MCF 10A (cell line): ENCODE measurements at regions of chr11 and their contacts with region 1.

Region 1: GRCh38 chr11:207208-207862 is at the starts of genes BET1L and RIC8A:
- DNase-seq: peak; percentile 97
- H3K4me3 Mint-ChIP-seq: peak within 1 kb of the TSS; percentile 99
- H3K27ac Mint-ChIP-seq: peak within 1 kb of the TSS; percentile 99
- H3K4me1 Mint-ChIP-seq: peaks cover 15% of the 10 kb centered on the region
- H3K27me3 Mint-ChIP-seq: no peaks in the 10 kb centered on the region
- CTCF ChIP-seq: no peak
- total RNA-seq, gene BET1L: 65.3 and 66.1 TPM in 2 replicates
- total RNA-seq, gene RIC8A: 93.3 and 109 TPM in 2 replicates

Region 2: GRCh38 chr11:223026-223789 is 15.9 kb after region 1 on chr11:
- CTCF ChIA-PET with region 1: interaction called, 6 read pairs
- POLR2A ChIA-PET with region 1: interaction called, 23 read pairs
- intact Hi-C with region 1: no loop called
- DNase-seq: no peak
- H3K4me3 Mint-ChIP-seq: no peak overlapping the region
- H3K27ac Mint-ChIP-seq: peak overlapping the region; percentile 38
- H3K4me1 Mint-ChIP-seq: peaks cover 9% of the 10 kb centered on the region
- H3K27me3 Mint-ChIP-seq: no peaks in the 10 kb centered on the region
- CTCF ChIP-seq: no peak

Region 3: GRCh38 chr11:304915-305843 is 97.8 kb after region 1 on chr11:
- CTCF ChIA-PET with region 1: interaction called, 3 read pairs
- POLR2A ChIA-PET with region 1: interaction called, 14 read pairs
- intact Hi-C with region 1: no loop called
- DNase-seq: peak; percentile 74
- H3K4me3 Mint-ChIP-seq: no peak overlapping the region
- H3K27ac Mint-ChIP-seq: no peak overlapping the region
- H3K4me1 Mint-ChIP-seq: peaks cover 20% of the 10 kb centered on the region
- H3K27me3 Mint-ChIP-seq: no peaks in the 10 kb centered on the region
- CTCF ChIP-seq: peak; percentile 58

Region 4: GRCh38 chr11:355581-356458 is 148.5 kb after region 1 on chr11:
- CTCF ChIA-PET with region 1: interaction called, 3 read pairs
- POLR2A ChIA-PET with region 1: interaction called, 32 read pairs
- intact Hi-C with region 1: no loop called
- DNase-seq: peak; percentile 94
- H3K4me3 Mint-ChIP-seq: peak overlapping the region; percentile 35
- H3K27ac Mint-ChIP-seq: peak overlapping the region; percentile 62
- H3K4me1 Mint-ChIP-seq: peaks cover 28% of the 10 kb centered on the region
- H3K27me3 Mint-ChIP-seq: peaks cover 11% of the 10 kb centered on the region
- CTCF ChIP-seq: no peak

Region 5: DNA sequence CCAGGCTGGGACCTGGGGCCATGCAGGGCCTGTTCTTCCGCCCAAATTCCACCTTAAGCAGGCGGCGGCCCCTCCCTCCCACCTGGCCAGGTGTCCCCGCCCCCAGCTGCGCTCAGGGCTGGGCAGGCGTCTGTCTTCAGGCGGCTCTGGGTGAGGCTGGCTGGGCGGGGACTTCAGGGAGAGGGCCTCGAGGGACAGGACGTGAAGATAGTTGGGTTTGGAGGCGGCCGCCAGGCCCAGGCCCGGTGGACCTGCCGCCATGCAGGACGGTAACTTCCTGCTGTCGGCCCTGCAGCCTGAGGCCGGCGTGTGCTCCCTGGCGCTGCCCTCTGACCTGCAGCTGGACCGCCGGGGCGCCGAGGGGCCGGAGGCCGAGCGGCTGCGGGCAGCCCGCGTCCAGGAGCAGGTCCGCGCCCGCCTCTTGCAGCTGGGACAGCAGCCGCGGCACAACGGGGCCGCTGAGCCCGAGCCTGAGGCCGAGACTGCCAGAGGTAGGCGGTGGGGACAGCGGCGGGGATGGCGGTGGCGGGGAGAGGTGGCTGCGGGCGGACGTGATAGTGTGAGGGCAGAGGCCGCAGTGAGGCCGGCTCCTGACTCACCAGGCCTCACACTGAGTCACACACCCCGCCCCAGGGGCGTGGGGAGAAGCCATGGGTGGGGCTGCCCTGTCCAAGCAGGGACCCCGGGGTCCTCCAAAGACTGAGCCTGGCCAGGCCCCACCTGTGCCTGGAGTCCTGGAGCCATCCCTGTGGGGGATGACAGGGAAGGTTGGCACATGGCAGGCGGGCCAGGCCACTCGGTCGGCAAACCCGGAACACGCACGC is 186.9 kb after region 1 on chr11 and contains the start of gene PKP3:
- CTCF ChIA-PET with region 1: no interaction called
- POLR2A ChIA-PET with region 1: interaction called, 27 read pairs
- intact Hi-C with region 1: no loop called
- DNase-seq: peak; percentile 94
- H3K4me3 Mint-ChIP-seq: peak within 1 kb of the TSS; percentile 96
- H3K27ac Mint-ChIP-seq: peak within 1 kb of the TSS; percentile 94
- H3K4me1 Mint-ChIP-seq: peaks cover 19% of the 10 kb centered on the region
- H3K27me3 Mint-ChIP-seq: no peaks in the 10 kb centered on the region
- CTCF ChIP-seq: no peak
- total RNA-seq, gene PKP3: 129 and 177 TPM in 2 replicates